ENCODE measurements at regions of chr15 and their contacts with region 1.

Region 1: DNA sequence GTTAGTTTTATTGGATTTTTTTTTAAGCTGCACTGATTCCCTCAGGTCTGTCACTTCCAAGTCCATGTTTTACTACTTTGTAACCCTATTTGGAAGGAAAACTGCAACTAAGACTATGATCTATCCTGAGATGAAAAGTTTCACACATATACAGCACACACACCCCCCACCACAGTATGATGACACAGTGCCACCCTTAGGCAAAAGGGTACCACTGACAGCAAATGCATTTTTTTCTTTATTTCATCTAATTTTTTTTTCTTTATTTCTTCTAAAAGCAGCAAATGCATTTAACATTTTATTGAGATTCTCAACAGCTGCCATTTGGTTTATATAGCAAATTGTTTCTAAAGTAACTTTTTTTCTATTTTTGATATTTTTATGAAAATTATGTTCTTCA is 21.2 kb downstream of the NGRN start:
- DNase-seq: peak; percentile 47
- CTCF ChIP-seq: peak; percentile 73

Region 2: GRCh38 chr15:90257776-90258175 is 28.9 kb before region 1 on chr15:
- CTCF ChIA-PET with region 1: no interaction called
- POLR2A ChIA-PET with region 1: no interaction called
- DNase-seq: no peak
- CTCF ChIP-seq: no peak

Region 3: GRCh38 chr15:90300988-90301706 is 14.5 kb after region 1 on chr15:
- CTCF ChIA-PET with region 1: interaction called, 96 read pairs
- POLR2A ChIA-PET with region 1: no interaction called
- DNase-seq: peak; percentile 48
- CTCF ChIP-seq: peak; percentile 80